Heart left ventricle (tissue), 16 donors: ENCODE measurements at regions of chr9 and their contacts with region 1.

Region 1: GRCh38 chr9:26210338-26210851 is 532.2 kb upstream of the TUSC1 start:
- DNase-seq: no peak
- ATAC-seq: no peak
- H3K4me3 ChIP-seq: no peak overlapping the region
- H3K27ac ChIP-seq: no peak overlapping the region
- H3K4me1 ChIP-seq: no peaks in the 10 kb centered on the region
- H3K27me3 ChIP-seq: no peaks in the 10 kb centered on the region
- CTCF ChIP-seq: no peak
- POLR2A ChIP-seq: no peak

Region 2: DNA sequence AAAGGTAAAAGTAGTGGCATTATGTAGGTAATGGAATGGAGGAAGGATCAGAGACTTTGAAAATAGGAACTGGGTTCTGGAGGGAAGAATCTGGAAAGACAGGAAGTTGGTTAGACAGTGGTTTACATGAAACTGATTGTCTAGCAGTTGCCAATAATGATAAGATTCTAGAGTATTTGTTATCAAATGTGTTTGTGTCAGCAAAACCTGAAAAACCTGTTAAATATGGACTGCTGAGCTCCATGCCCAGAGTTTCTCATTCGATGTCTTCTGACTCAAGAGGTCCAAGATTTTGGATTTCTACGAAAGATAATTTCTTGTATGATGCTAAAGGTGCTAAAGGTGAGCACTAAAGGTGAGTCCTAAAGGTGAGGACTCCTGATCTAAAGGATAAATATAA is 17.2 kb before region 1 on chr9:
- intact Hi-C with region 1: loop called in 1 of 10 experiments (anchors 2 kb)
- DNase-seq: no peak
- ATAC-seq: no peak
- H3K4me3 ChIP-seq: no peak overlapping the region
- H3K27ac ChIP-seq: no peak overlapping the region
- H3K4me1 ChIP-seq: no peaks in the 10 kb centered on the region
- H3K27me3 ChIP-seq: no peaks in the 10 kb centered on the region
- CTCF ChIP-seq: no peak
- POLR2A ChIP-seq: no peak

Region 3: GRCh38 chr9:26261503-26262330 is 51.3 kb after region 1 on chr9:
- intact Hi-C with region 1: no loop called
- DNase-seq: no peak
- ATAC-seq: no peak
- H3K4me3 ChIP-seq: no peak overlapping the region
- H3K27ac ChIP-seq: no peak overlapping the region
- H3K4me1 ChIP-seq: no peaks in the 10 kb centered on the region
- H3K27me3 ChIP-seq: no peaks in the 10 kb centered on the region
- CTCF ChIP-seq: no peak
- POLR2A ChIP-seq: no peak